ENCODE measurements at regions of chr4 and their contacts with region 1.

Region 1: DNA sequence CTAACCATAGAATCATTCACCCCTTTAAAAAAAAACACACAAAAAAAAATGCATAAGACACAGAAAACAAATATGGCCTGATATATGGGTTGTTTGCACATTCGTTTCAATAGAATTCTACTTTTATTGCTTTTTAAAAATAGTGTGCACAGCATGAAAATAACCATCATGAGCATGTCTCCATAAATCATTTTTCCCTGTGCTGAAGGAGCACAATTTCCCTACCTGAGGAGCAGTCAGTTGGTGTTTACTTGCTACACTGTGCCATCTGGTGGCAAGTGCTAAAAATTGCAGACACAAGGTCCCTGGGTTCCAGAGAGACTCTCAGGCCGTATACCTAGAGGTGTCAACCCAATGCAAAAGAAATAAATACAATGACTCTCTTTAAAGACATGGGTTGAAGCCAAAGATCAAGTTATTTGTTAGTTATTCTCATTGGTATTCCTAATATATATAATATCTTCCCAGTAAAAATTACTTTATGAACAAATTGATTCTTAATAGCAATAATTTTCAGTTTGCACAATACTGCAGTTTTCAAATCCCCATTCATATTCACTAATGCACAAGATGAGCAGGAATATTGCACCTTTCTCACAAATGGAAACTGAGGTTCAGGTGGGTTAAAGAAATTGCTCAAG is 551.4 kb downstream of the IQCM start:
- DNase-seq: peak; percentile 84
- H3K4me3 ChIP-seq: no peak overlapping the region
- H3K27ac ChIP-seq: no peak overlapping the region
- H3K4me1 ChIP-seq: peaks cover 64% of the 10 kb centered on the region
- H3K27me3 ChIP-seq: no peaks in the 10 kb centered on the region
- CTCF ChIP-seq: peak; percentile 77

Region 2: DNA sequence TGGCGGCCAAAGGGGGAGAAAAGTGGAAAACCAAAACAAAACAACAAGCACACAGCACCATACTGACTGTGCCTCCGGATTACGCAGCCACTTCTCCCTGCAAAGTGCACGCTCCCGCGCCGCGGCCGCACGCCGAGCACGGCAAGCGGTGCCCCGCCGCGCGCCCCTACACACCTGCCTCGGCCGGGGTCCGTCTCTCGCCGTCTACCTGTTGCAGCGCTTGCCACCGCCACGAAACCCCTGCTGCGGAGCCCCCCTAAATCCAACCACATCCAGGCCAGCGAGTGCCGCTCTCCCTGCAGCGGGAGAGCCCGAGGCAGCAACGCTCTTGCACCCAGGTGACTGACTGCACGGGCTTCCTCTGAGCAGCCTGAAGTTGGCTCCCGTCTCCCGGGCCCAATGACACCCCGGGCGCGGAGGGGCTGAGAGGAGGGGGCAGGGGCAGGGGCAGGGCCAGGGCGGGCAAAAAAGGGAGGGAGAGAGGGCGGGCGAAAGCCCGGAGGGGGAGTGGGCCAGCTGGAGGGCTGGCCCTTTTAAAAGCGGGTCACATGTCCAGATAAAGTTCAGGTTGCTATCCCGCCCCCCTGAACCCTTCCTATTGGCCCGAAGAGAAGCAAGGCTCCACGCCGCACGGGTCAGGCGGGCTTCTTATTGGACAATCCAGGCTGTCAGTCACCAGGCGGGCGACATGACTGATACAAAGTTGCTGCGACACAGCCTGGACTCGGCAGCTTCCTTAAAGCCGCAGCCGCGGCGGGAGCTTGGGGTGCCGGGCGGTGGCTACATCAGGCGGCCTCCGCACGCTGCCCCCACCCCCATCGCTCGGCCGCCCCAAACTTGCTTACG is 822.0 kb before region 1 on chr4 and contains the start of gene NR3C2:
- CTCF ChIA-PET with region 1: interaction called, 4 read pairs
- POLR2A ChIA-PET with region 1: no interaction called
- intact Hi-C with region 1: loop called (anchors 10 kb)
- DNase-seq: peak; percentile 98
- H3K4me3 ChIP-seq: peak within 1 kb of the TSS; percentile 72
- H3K27ac ChIP-seq: peak within 1 kb of the TSS; percentile 43
- H3K4me1 ChIP-seq: peaks cover 13% of the 10 kb centered on the region
- H3K27me3 ChIP-seq: peaks cover 15% of the 10 kb centered on the region
- CTCF ChIP-seq: no peak
- total RNA-seq, gene NR3C2: 1.6 and 2.2 TPM in 2 replicates

Region 3: DNA sequence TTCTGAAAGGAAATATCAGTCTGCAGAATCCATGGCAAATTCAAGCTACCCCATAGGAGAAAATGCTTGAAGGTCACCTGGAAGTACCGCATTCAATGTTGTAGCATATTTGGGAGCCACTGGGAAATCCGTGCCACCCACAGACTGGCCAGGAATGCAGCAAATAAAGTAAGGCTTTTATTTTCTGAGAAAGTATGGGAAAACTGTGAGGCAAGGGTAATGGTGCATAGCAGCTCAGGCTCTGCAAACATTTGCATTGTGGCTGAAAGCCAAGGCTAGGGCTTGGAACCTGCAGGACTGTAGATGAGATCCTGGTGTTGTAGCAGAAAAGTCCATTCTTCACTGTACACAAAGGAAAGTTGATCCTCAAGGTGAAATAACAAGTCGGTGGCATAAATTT is 371.1 kb before region 1 on chr4:
- CTCF ChIA-PET with region 1: no interaction called
- POLR2A ChIA-PET with region 1: no interaction called
- intact Hi-C with region 1: no loop called
- DNase-seq: no peak
- H3K4me3 ChIP-seq: no peak overlapping the region
- H3K27ac ChIP-seq: no peak overlapping the region
- H3K4me1 ChIP-seq: no peaks in the 10 kb centered on the region
- H3K27me3 ChIP-seq: no peaks in the 10 kb centered on the region
- CTCF ChIP-seq: no peak

Region 4: GRCh38 chr4:149008415-149009025 is 255.7 kb before region 1 on chr4:
- CTCF ChIA-PET with region 1: no interaction called
- POLR2A ChIA-PET with region 1: no interaction called
- intact Hi-C with region 1: loop called (anchors 10 kb)
- DNase-seq: no peak
- H3K4me3 ChIP-seq: no peak overlapping the region
- H3K27ac ChIP-seq: no peak overlapping the region
- H3K4me1 ChIP-seq: no peaks in the 10 kb centered on the region
- H3K27me3 ChIP-seq: no peaks in the 10 kb centered on the region
- CTCF ChIP-seq: no peak

Region 5: DNA sequence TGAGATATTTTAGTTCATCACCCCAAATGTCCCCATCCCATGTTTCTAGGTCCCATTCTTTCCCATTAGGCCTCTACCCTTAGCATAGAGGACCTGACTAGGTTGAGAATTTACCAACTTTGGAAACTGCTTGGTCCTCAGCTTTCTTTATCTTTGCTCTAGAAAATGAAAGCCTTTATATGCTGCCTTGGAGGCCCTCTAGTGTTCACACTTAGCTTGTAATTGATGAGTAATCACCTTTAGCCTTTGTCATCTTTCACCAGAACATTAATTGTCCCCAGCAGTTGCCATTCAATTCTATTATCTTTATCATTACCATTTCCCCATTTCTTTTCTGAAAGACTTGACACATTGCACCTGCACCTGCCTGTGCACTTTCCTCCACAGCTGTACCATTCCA is 232.8 kb before region 1 on chr4:
- CTCF ChIA-PET with region 1: no interaction called
- POLR2A ChIA-PET with region 1: no interaction called
- intact Hi-C with region 1: loop called (anchors 5 kb)
- DNase-seq: peak; percentile 52
- H3K4me3 ChIP-seq: no peak overlapping the region
- H3K27ac ChIP-seq: no peak overlapping the region
- H3K4me1 ChIP-seq: no peaks in the 10 kb centered on the region
- H3K27me3 ChIP-seq: no peaks in the 10 kb centered on the region
- CTCF ChIP-seq: peak; percentile 65

Region 6: DNA sequence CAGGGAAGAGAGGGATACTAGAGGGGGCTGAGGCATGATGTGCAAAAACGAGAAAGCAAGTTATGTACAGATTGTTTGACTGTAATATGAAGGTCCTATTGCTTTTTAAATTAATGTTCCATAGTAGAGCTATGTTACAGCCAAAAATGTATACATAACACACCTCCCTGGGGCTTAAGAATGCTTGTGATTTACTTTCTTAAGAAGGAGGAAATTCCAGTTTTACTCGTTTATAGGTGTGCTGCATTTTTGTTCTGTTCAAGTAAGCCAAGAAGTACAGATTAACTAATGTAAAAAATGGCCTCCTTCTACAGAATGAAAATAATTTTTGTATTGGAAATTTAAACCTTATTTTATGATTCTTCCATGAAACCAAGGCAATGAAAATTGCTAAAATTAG is 207.6 kb before region 1 on chr4:
- CTCF ChIA-PET with region 1: no interaction called
- POLR2A ChIA-PET with region 1: no interaction called
- intact Hi-C with region 1: no loop called
- DNase-seq: no peak
- H3K4me3 ChIP-seq: no peak overlapping the region
- H3K27ac ChIP-seq: no peak overlapping the region
- H3K4me1 ChIP-seq: no peaks in the 10 kb centered on the region
- H3K27me3 ChIP-seq: no peaks in the 10 kb centered on the region
- CTCF ChIP-seq: no peak

Region 7: DNA sequence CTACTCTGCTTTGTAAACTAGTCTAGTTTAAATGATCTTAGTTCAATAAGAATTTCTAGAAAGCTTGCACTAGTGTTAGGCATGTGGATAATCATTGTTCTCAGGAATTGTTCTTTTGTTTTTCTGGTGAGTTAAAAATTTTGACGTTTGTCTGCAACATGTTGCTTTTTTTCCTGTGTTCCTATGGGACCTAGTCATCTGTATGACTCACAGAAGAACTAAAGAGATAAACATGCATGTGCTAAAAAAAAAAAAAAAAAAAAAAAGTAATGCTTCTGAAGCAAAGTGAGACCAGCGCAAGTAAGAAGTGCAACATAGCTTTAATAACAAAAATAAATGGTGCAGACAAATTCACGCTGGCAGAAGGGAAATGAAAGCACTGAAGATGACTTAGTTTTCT is 80.2 kb after region 1 on chr4:
- CTCF ChIA-PET with region 1: no interaction called
- POLR2A ChIA-PET with region 1: no interaction called
- intact Hi-C with region 1: loop called (anchors 2 kb)
- DNase-seq: peak; percentile 72
- H3K4me3 ChIP-seq: no peak overlapping the region
- H3K27ac ChIP-seq: peak overlapping the region; percentile 97
- H3K4me1 ChIP-seq: peaks cover 51% of the 10 kb centered on the region
- H3K27me3 ChIP-seq: no peaks in the 10 kb centered on the region
- CTCF ChIP-seq: no peak